Activated CD8-positive, alpha-beta T cell treated with anti-CD3 and anti-CD28 coated beads for 36 hours (primary cell): ENCODE measurements at regions of chr14 and their contacts with region 1.

Region 1: DNA sequence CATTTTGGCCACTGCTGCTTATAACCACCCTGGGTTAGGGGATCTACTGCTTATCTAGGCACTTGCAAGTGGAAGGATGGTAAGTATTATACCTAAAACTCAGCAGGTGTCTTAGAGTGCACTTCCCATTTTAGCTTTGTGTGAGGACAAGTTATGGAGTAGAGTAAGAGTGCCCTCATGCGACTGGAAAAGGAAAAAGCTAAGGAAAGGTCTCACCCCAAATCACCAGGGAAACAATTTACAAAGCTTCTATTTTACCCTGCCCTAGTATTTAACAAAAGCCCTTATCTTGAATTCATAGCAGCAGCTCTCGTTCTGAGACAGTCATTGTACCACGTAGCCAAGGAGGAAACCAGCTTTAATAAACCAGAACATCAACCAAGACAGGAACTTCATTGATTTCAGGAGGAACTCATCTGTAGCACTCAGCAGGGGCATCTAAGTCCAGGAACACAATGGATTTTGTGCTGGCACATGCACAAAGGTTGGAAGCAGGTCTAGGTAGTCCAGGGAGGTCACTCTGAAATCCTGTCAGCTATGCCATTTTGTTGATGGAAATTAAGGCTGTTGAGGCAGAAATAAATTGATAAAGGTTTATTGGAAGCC is 2.9 kb downstream of the RDH12 start:
- DNase-seq: peak; percentile 44
- ATAC-seq: peak; percentile 89
- H3K4me3 Mint-ChIP-seq: no peak overlapping the region
- H3K27ac Mint-ChIP-seq: no peak overlapping the region
- H3K4me1 Mint-ChIP-seq: no peaks in the 10 kb centered on the region
- H3K27me3 Mint-ChIP-seq: peaks cover 2% of the 10 kb centered on the region
- CTCF ChIP-seq: peak; percentile 72

Region 2: GRCh38 chr14:67420102-67420830 is 284.3 kb before region 1 on chr14:
- CTCF ChIA-PET with region 1: interaction called, 11 read pairs
- POLR2A ChIA-PET with region 1: no interaction called
- intact Hi-C with region 1: no loop called
- DNase-seq: peak; percentile 53
- ATAC-seq: peak; percentile 67
- H3K4me3 Mint-ChIP-seq: no peak overlapping the region
- H3K27ac Mint-ChIP-seq: no peak overlapping the region
- H3K4me1 Mint-ChIP-seq: no peaks in the 10 kb centered on the region
- H3K27me3 Mint-ChIP-seq: peaks cover 13% of the 10 kb centered on the region
- CTCF ChIP-seq: peak; percentile 62

Region 3: GRCh38 chr14:67583711-67584644 is 120.6 kb before region 1 on chr14:
- CTCF ChIA-PET with region 1: interaction called, 75 read pairs
- POLR2A ChIA-PET with region 1: no interaction called
- intact Hi-C with region 1: loop called (anchors 10 kb)
- DNase-seq: peak; percentile 39
- ATAC-seq: peak; percentile 80
- H3K4me3 Mint-ChIP-seq: no peak overlapping the region
- H3K27ac Mint-ChIP-seq: no peak overlapping the region
- H3K4me1 Mint-ChIP-seq: no peaks in the 10 kb centered on the region
- H3K27me3 Mint-ChIP-seq: no peaks in the 10 kb centered on the region
- CTCF ChIP-seq: peak; percentile 51

Region 4: DNA sequence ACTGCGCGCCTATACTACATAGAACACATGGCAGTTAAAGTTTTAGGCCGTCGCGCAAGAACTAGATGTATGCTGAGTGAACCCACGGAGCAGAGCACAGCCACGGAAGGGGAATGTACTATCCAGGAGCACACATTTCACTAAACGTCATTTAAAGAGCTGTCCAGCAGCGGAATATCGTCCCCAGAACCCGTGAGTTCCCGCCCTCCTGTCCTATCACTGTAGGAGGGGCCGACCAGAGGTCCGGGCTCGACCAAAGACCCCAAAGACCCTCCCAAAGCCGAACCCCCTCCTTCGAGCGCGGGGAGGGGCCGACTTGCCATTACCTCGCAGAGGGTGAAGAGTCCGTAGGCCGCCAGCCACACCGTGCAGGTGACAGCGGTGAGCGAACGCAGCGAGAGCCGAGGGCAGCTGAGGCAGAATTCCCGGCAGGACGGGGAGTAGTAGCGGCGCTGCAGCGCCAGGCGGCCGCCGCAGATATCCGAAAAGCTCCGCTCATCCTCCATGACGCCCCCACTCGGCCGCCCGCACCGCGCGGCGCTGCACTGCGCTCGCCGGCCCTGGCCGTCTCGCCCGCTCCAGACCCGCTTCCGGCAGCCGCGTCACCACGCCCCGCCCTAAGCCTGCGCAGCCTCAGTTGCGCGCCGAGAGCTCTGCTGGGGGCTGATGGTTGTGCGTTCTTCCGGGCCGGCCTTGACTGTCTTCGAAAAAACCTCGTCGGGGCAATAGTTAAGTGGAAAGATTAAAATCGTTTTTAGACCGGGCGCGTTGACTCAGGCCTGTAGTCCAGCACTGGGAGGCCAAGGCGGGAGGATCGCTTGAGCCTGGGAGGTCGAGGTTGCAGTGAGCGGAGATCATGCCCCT is 104.7 kb before region 1 on chr14 and contains the start of gene PIGH:
- CTCF ChIA-PET with region 1: interaction called, 34 read pairs
- POLR2A ChIA-PET with region 1: no interaction called
- intact Hi-C with region 1: no loop called
- DNase-seq: peak; percentile 95
- ATAC-seq: peak; percentile 100
- H3K4me3 Mint-ChIP-seq: peak within 1 kb of the TSS; percentile 89
- H3K27ac Mint-ChIP-seq: peak within 1 kb of the TSS; percentile 94
- H3K4me1 Mint-ChIP-seq: peaks cover 41% of the 10 kb centered on the region
- H3K27me3 Mint-ChIP-seq: no peaks in the 10 kb centered on the region
- CTCF ChIP-seq: peak; percentile 44
- total RNA-seq, gene PIGH: 20.3 to 21.9 TPM

Region 5: GRCh38 chr14:67610491-67610890 is 94.1 kb before region 1 on chr14:
- CTCF ChIA-PET with region 1: interaction called, 14 read pairs
- POLR2A ChIA-PET with region 1: no interaction called
- intact Hi-C with region 1: no loop called
- DNase-seq: peak; percentile 54
- ATAC-seq: peak; percentile 98
- H3K4me3 Mint-ChIP-seq: no peak overlapping the region
- H3K27ac Mint-ChIP-seq: no peak overlapping the region
- H3K4me1 Mint-ChIP-seq: peaks cover 9% of the 10 kb centered on the region
- H3K27me3 Mint-ChIP-seq: peaks cover 3% of the 10 kb centered on the region
- CTCF ChIP-seq: no peak

Region 6: GRCh38 chr14:67619446-67620216 is 85.0 kb before region 1 on chr14 and contains the start of gene ARG2:
- CTCF ChIA-PET with region 1: interaction called, 119 read pairs
- POLR2A ChIA-PET with region 1: interaction called, 4 read pairs
- intact Hi-C with region 1: loop called (anchors 2 kb)
- DNase-seq: peak; percentile 98
- ATAC-seq: peak; percentile 92
- H3K4me3 Mint-ChIP-seq: peak within 1 kb of the TSS; percentile 83
- H3K27ac Mint-ChIP-seq: peak within 1 kb of the TSS; percentile 78
- H3K4me1 Mint-ChIP-seq: peaks cover 27% of the 10 kb centered on the region
- H3K27me3 Mint-ChIP-seq: peaks cover 12% of the 10 kb centered on the region
- CTCF ChIP-seq: no peak
- total RNA-seq, gene ARG2: 9.9 TPM

Region 7: DNA sequence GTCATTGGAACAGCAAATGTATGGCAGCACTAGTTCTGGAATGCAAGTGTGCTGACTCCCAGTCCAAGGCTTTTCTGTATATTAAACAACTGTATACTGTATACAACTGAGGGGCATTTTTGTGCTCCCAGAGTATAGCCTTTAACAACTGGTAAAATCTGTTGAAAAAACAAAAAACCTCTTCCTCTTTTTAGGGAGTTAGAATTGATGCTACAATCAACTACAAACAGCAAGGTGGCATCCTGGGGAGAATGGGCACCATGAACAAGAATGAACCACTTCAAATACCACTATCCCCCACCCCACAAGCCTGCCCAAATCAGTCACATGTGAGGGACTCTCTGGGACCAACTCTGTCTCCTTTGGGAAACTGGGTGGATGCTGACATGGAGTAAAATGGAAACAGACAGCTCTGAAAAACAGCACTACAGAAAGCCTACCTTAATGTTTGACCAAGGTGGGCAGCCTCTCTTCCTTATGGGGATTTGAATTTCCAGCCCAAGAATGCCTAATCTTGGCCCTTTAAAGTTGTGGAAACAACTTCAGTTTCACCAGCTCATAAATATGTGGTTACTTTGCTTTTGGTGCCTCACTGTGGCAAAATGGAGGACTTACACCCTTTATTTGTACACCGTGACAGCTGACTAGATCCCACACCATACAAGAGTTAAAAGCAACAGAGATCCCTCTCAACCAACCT is 37.7 kb before region 1 on chr14:
- CTCF ChIA-PET with region 1: interaction called, 58 read pairs
- POLR2A ChIA-PET with region 1: no interaction called
- intact Hi-C with region 1: no loop called
- DNase-seq: peak; percentile 44
- ATAC-seq: peak; percentile 87
- H3K4me3 Mint-ChIP-seq: no peak overlapping the region
- H3K27ac Mint-ChIP-seq: peak overlapping the region; percentile 61
- H3K4me1 Mint-ChIP-seq: peaks cover 53% of the 10 kb centered on the region
- H3K27me3 Mint-ChIP-seq: no peaks in the 10 kb centered on the region
- CTCF ChIP-seq: peak; percentile 47

Region 8: DNA sequence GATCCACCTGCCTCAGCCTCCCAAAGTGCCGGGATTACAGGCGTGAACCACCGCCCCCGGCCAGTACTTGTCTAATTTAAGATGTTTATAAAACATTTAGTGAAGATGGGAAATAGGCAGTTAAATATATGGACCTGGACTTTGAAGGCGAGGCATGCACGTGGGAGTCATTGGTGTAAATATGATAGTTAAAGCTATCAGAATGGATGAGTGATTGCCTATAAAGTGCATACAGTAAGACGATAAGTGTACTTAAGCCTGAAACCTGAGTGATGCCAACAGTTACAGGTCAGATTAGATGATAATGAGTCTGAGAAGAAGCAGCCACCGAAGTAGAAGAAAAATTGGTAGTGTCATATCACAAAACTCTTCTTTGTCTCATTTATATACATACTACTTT is 126.5 kb after region 1 on chr14:
- CTCF ChIA-PET with region 1: no interaction called
- POLR2A ChIA-PET with region 1: no interaction called
- intact Hi-C with region 1: no loop called
- DNase-seq: no peak
- ATAC-seq: no peak
- H3K4me3 Mint-ChIP-seq: no peak overlapping the region
- H3K27ac Mint-ChIP-seq: no peak overlapping the region
- H3K4me1 Mint-ChIP-seq: no peaks in the 10 kb centered on the region
- H3K27me3 Mint-ChIP-seq: no peaks in the 10 kb centered on the region
- CTCF ChIP-seq: no peak

Region 9: GRCh38 chr14:68020999-68021663 is 316.5 kb after region 1 on chr14:
- CTCF ChIA-PET with region 1: no interaction called
- POLR2A ChIA-PET with region 1: no interaction called
- intact Hi-C with region 1: no loop called
- DNase-seq: no peak
- ATAC-seq: no peak
- H3K4me3 Mint-ChIP-seq: no peak overlapping the region
- H3K27ac Mint-ChIP-seq: no peak overlapping the region
- H3K4me1 Mint-ChIP-seq: no peaks in the 10 kb centered on the region
- H3K27me3 Mint-ChIP-seq: no peaks in the 10 kb centered on the region
- CTCF ChIP-seq: no peak